Endothelial cell of umbilical vein (primary cell): ENCODE measurements at regions of chr10 and their contacts with region 1.

Region 1: DNA sequence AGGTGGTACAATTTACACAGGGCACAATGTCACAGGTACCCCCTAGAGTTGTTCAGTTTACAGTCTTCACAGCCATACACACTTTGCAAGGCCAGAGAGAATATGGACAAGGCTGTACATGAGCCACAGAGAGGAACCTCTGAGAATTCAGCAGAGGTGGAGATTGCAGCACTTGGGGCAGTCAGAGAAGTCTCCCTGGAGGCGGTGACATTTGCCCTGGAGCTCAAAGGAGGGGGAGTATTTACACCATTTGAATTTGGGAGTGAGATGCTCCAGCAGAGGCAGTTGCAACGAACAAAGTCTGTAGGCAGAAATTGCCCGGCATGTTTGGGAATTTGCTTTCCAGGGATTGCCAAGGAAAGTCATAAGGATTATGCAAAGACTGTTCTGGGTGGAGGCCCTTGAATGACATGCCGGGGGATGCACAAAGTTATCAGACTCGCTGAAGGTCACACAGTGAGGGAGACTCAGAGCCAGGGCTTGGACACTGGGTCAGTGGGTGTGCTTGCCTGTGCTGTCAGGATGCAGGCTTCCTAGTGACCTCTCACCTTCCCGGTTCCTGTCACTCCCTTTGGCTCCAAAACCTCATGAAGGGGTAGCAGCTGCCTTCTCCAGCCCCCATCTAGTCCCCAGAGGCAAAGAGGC is 160.7 kb upstream of the PCBD1 start:
- DNase-seq: no peak
- H3K4me3 ChIP-seq: no peak overlapping the region
- H3K27ac ChIP-seq: no peak overlapping the region
- H3K4me1 ChIP-seq: no peaks in the 10 kb centered on the region
- H3K27me3 ChIP-seq: peaks cover 0 to 2% of the 10 kb centered on the region in 2 experiments
- CTCF ChIP-seq: no peak
- POLR2A ChIP-seq: no peak

Region 2: GRCh38 chr10:71025535-71025934 is 23.6 kb before region 1 on chr10:
- CTCF ChIA-PET with region 1: no interaction called
- POLR2A ChIA-PET with region 1: no interaction called
- dilution Hi-C with region 1: no loop called
- intact Hi-C with region 1: loop called (anchors 1 kb)
- DNase-seq: no peak
- H3K4me3 ChIP-seq: no peak overlapping the region
- H3K27ac ChIP-seq: no peak overlapping the region
- H3K4me1 ChIP-seq: no peaks in the 10 kb centered on the region
- H3K27me3 ChIP-seq: peaks cover 3 to 5% of the 10 kb centered on the region in 2 experiments
- CTCF ChIP-seq: no peak
- POLR2A ChIP-seq: no peak

Region 3: DNA sequence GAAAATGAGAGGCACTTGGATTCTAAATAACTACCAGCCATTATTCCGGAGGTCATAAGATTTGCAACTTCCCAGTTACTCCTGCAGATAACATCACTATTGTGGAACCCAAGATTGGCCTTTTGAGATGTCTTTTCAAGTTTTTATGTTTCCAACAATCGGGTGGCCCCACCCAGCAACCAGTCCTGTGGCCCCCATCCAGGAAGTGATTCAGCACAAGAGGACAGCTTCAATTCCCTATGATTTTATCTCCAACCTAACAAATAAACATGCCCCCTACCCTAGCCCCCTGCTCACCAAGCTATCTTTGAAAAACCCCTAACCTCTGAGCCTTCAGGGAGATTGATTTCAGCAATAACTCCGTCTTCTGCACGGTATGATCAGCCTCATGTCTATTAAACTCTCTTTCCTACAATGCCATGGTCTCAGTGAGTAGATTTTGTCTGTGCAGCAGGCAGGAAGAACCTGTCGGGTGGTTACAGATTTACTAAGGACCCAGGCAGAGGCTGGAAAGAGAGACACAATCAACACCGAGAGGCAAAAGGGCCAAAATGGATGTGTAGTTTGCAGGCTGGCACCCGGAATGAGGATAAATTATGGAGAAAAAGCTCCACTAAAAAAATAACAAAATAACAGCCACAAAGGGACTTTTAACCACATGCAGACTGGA is 79.4 kb after region 1 on chr10:
- CTCF ChIA-PET with region 1: no interaction called
- POLR2A ChIA-PET with region 1: no interaction called
- dilution Hi-C with region 1: no loop called
- intact Hi-C with region 1: no loop called
- DNase-seq: no peak
- H3K4me3 ChIP-seq: no peak overlapping the region
- H3K27ac ChIP-seq: no peak overlapping the region
- H3K4me1 ChIP-seq: peaks cover 4% of the 10 kb centered on the region
- H3K27me3 ChIP-seq: peaks cover 8 to 27% of the 10 kb centered on the region in 2 experiments
- CTCF ChIP-seq: no peak
- POLR2A ChIP-seq: no peak